ENCODE measurements at regions of chr1 and their contacts with region 1.

Region 1: GRCh38 chr1:193059268-193060225 is at the starts of genes RO60 and UCHL5:
- DNase-seq: peak; percentile 93
- CTCF ChIP-seq: peak; percentile 21

Region 2: GRCh38 chr1:192350356-192350755 is 709.2 kb before region 1 on chr1:
- CTCF ChIA-PET with region 1: no interaction called
- POLR2A ChIA-PET with region 1: no interaction called
- DNase-seq: no peak
- CTCF ChIP-seq: no peak

Region 3: GRCh38 chr1:192951691-192952460 is 107.7 kb before region 1 on chr1:
- CTCF ChIA-PET with region 1: no interaction called
- POLR2A ChIA-PET with region 1: no interaction called
- DNase-seq: peak; percentile 15
- CTCF ChIP-seq: no peak

Region 4: DNA sequence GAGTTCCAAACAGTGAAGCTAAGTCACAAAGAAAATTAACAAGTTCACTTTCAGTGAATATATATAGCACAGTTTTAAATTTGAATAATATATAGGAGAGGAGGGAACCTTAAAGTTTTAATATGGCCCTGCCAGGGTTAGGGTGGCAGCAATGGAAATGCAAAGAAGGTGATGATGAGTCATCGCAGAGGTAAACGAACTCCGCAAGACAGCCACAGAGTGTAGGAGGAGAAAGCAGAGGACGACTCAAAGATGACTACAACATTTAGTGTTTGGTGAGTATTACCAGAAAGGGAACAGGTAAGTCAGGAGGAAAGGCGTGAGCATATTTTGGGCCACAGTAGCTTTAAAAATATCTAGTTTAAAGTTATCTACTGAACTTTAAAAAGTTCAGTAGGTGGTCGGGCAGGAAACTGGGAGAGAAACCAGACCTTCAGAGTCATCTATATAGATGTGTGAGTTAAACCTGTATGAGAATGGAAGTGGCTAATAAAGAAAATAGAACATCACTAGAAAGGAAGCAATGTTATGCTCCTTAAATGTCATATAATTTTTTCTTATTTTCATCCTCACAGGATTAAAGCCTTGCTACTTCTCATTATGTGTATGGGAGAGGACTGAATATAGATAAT is 76.1 kb before region 1 on chr1:
- CTCF ChIA-PET with region 1: no interaction called
- POLR2A ChIA-PET with region 1: no interaction called
- DNase-seq: peak; percentile 39
- CTCF ChIP-seq: no peak

Region 5: DNA sequence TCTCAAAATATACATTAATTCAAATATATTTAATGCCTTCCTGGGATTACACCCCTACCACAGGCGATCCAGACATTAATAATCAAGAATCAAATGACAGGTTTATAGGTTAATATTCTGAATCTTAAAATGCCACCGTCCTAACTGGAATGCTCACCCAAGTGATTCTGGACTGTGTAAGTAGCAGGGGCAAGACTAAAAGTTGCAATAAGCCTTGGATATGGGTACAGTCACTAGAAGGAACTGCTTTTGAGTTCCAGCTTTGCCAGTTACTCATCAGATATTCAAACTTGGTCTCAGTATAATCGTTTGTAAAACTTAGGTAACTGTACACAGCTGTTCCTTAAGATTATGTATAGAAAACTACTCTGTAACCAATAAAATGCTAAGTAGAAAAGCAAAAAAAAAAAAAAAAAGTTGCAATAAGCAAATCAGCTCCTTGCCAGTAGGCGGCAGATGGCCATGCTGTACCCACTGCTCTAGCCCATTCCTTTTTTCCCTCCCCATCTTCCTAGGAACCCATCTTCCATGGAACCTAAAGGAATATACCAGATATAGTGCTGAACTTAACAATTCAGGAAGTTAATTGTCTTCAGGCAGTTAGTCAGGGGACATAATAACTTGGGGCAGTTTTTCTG is 10.3 kb after region 1 on chr1:
- CTCF ChIA-PET with region 1: interaction called, 21 read pairs
- POLR2A ChIA-PET with region 1: interaction called, 3 read pairs
- DNase-seq: no peak
- CTCF ChIP-seq: no peak

Region 6: GRCh38 chr1:193104906-193105820 is 45.6 kb after region 1 on chr1 and contains the start of gene GLRX2:
- CTCF ChIA-PET with region 1: interaction called, 10 read pairs
- POLR2A ChIA-PET with region 1: interaction called, 15 read pairs
- DNase-seq: peak; percentile 96
- CTCF ChIP-seq: no peak

Region 7: GRCh38 chr1:193156826-193157142 is 97.2 kb after region 1 on chr1:
- CTCF ChIA-PET with region 1: no interaction called
- POLR2A ChIA-PET with region 1: no interaction called
- DNase-seq: no peak
- CTCF ChIP-seq: no peak